Posterior vena cava (tissue), 2 donors: ENCODE measurements at regions of chr3 and their contacts with region 1.

Region 1: DNA sequence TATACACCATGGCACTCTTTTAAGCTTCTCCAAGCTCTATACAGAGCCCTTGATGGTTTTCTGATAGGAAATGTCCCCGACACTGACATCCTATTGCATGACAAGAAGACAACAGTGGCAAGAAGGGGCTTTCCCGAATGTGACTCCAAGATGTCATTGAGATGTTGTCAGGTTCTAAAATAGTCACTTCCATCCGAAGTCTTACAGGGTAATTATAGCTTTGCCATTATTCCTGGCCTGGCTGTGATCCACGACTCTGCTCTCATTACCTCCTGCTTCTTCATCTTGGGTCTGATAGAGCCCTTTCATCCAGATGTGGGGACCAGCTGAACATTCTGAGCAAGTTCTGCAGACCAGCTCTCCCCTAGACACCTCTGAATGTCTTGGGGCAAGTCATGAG is 40.6 kb upstream of the ADAMTS9 start:
- DNase-seq: no peak

Region 2: DNA sequence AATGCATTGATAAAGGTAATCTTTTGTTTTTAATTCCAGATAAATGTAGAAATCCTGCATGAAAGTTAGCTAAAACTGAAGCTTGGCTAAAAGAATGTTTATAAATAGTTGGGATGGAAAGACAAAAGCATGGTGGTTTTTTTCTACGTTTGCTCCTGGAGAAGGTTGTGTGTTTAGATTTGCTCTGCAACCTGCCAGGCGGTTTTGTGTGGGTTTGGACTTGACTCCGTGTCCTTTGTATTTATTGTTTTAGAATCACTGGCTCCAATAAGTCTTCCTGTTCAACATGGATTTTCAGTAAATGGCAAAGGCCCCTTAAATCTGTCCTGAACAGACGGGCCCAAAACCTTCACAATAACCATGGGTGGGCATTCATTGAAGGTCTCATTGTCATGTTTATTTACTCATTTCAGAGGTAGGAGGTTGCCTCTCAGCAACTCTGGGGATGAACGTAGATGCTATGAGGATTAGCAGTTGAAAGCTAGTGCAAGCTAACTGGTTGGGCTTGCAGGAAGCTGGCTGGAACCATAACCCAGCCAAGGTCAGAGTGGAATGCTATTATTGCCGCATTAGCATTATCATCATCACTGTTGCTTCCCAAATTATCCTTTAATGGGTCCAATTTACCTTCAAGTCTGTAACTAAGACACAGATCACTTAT is 19.9 kb after region 1 on chr3:
- intact Hi-C with region 1: no loop called
- DNase-seq: no peak

Region 3: GRCh38 chr3:65854606-65855313 is 1126.3 kb after region 1 on chr3:
- intact Hi-C with region 1: loop called in 1 of 2 experiments (anchors 5 kb)
- DNase-seq: no peak